A549 (cell line): ENCODE measurements at regions of chr15 and their contacts with region 1.

Region 1: GRCh38 chr15:75307778-75308391 is 25.2 kb downstream of the GOLGA6D start:
- DNase-seq: peak; percentile 77 to 92
- ATAC-seq: peak; percentile 99 to 100
- H3K4me3 ChIP-seq: no peak overlapping the region
- H3K27ac ChIP-seq: peak overlapping the region in 1 of 2 experiments; percentile 42; a peak in 1 of 6 replicates
- H3K4me1 ChIP-seq: peaks cover 6% of the 10 kb centered on the region; the same call in 2 of the 3 replicates
- CTCF ChIP-seq: peak; percentile 76
- EP300 ChIP-seq: no peak
- POLR2A ChIP-seq: no peak
- RAD21 ChIP-seq: peak; percentile 93 to 96

Region 2: DNA sequence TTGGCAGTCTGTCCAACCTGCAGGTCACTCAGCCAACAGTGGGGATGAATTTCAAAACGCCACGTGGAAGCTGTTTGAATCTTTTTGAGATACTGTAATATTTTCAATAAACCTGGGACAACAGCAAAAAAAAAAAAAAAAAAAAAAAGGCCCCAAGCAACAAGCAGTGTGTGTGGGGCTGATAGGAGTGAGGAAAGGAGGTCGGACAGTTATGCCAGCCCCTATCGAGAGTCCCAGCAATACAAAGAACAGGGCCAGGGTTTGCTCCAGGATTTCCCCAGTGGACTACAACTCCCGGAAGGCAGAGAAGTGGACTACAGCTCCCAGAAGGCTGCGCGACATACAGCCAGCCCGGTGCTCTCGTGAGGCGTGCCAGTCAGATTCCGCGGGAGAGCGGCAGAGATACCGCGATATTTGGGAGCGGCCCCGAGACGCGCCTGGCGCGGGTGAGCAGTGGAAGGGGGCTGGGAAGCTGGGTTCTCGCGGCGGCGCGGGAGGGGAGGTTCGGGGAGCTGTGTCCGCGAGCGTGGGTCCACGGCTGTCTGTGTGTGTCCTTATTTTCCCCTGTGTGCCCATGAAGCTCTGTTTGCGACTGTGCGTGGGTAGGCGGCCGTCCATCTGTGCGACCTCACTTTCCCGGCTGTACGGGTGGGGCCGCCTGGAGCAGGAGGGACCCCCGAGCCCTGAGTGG is 284.6 kb before region 1 on chr15 and contains the start of gene PPCDC:
- CTCF ChIA-PET with region 1: interaction called, 52 read pairs
- POLR2A ChIA-PET with region 1: interaction called, 5 read pairs
- DNase-seq: peak; percentile 97 to 100
- ATAC-seq: peak; percentile 98 to 99
- H3K4me3 ChIP-seq: peak within 1 kb of the TSS; percentile 71
- H3K27ac ChIP-seq: peak within 1 kb of the TSS; percentile 90 to 94
- H3K4me1 ChIP-seq: peaks cover 4% of the 10 kb centered on the region; the same call in 1 of the 3 replicates
- CTCF ChIP-seq: no peak
- EP300 ChIP-seq: no peak
- POLR2A ChIP-seq: peak; percentile 98
- RAD21 ChIP-seq: no peak
- polyA plus RNA-seq, gene PPCDC: 14.5 and 18.2 TPM in 2 replicates

Region 3: GRCh38 chr15:75036314-75036649 is 271.6 kb before region 1 on chr15:
- CTCF ChIA-PET with region 1: interaction called, 52 read pairs
- POLR2A ChIA-PET with region 1: no interaction called
- DNase-seq: peak in 1 of 2 experiments; percentile 44
- ATAC-seq: peak; percentile 44 to 48; a peak in 3 of 6 replicates
- H3K4me3 ChIP-seq: no peak overlapping the region
- H3K27ac ChIP-seq: peak overlapping the region in 1 of 2 experiments; percentile 5; a peak in 1 of 6 replicates
- H3K4me1 ChIP-seq: peaks cover 31% of the 10 kb centered on the region
- CTCF ChIP-seq: no peak
- EP300 ChIP-seq: no peak
- POLR2A ChIP-seq: no peak
- RAD21 ChIP-seq: no peak

Region 4: DNA sequence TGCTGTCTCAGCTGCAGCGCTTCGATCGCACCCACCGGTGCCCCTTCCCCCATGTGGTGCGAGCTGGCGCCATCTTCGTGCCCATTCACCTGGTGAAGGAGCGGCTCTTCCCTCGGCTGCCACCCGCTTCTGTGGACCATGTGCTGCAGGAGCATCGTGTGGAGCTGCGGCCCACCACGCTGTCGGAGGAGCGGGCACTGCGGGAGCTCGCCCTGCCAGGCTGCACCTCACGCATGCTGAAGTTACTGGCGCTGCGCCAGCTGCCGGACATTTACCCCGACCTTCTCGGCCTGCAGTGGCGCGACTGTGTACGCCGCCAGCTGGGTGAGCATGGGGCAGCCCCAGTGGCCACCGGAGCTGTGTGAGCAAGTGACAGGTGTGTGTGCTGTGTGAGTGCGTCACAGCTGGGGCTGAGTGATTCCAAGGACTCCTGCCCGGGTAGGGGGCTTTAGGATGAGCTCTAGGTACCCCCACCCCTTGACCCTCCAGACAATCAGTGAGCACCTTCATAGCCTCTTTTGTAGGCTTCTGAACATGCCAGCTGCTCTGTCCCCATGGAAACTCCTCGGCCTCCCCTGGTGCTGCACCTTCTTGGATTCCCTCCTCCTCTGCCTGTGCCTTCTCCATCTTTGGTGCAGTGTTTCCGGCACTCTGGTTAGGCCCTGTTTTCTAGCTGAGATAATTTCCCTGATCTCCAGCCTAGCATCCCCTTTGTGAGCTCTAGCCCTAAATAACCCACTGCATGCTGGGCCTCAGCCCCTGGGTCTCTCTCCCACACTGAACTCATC is 99.2 kb before region 1 on chr15:
- CTCF ChIA-PET with region 1: interaction called, 32 read pairs
- POLR2A ChIA-PET with region 1: no interaction called
- DNase-seq: no peak
- ATAC-seq: no peak
- H3K4me3 ChIP-seq: no peak overlapping the region
- H3K27ac ChIP-seq: no peak overlapping the region
- H3K4me1 ChIP-seq: peaks cover 22% of the 10 kb centered on the region
- CTCF ChIP-seq: no peak
- EP300 ChIP-seq: no peak
- POLR2A ChIP-seq: no peak
- RAD21 ChIP-seq: no peak

Region 5: DNA sequence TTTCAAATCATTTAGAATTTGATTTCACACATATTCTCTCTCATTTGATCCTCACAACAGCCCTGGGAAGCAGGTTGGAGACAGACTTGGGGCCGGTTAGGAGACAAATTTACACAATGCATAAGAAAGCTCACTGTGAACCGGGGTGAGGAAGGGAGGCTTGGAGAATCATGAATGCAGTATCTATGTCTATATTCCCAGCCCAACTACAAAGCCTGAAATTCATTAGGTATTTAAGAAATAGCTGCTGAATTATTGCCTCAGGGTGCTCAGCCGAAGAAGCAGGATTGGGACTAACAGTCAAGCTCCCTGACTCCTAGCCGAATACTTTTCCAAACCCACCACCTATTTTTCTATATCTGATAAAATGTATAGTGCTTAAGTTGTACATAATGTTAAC is 58.2 kb before region 1 on chr15:
- CTCF ChIA-PET with region 1: interaction called, 13 read pairs
- POLR2A ChIA-PET with region 1: no interaction called
- DNase-seq: no peak
- ATAC-seq: no peak
- H3K4me3 ChIP-seq: no peak overlapping the region
- H3K27ac ChIP-seq: no peak overlapping the region
- H3K4me1 ChIP-seq: 0 out of 3 replicates have a peak, but pooled peaks cover 6% of the 10 kb centered on the region
- CTCF ChIP-seq: no peak
- EP300 ChIP-seq: no peak
- POLR2A ChIP-seq: no peak
- RAD21 ChIP-seq: no peak

Region 6: GRCh38 chr15:75367913-75368688 is 60.2 kb after region 1 on chr15 and contains the start of gene MAN2C1:
- CTCF ChIA-PET with region 1: no interaction called
- POLR2A ChIA-PET with region 1: no interaction called
- DNase-seq: peak; percentile 98 to 99
- ATAC-seq: peak; percentile 90 to 93
- H3K4me3 ChIP-seq: peak within 1 kb of the TSS; percentile 81
- H3K27ac ChIP-seq: peak within 1 kb of the TSS; percentile 93 to 95
- H3K4me1 ChIP-seq: peaks cover 21% of the 10 kb centered on the region
- CTCF ChIP-seq: peak; percentile 95
- EP300 ChIP-seq: no peak
- POLR2A ChIP-seq: peak; percentile 98
- RAD21 ChIP-seq: peak; percentile 73 to 79
- polyA plus RNA-seq, gene MAN2C1: 47.7 and 66.3 TPM in 2 replicates